ENCODE measurements at regions of chr16 and their contacts with region 1.

Region 1: DNA sequence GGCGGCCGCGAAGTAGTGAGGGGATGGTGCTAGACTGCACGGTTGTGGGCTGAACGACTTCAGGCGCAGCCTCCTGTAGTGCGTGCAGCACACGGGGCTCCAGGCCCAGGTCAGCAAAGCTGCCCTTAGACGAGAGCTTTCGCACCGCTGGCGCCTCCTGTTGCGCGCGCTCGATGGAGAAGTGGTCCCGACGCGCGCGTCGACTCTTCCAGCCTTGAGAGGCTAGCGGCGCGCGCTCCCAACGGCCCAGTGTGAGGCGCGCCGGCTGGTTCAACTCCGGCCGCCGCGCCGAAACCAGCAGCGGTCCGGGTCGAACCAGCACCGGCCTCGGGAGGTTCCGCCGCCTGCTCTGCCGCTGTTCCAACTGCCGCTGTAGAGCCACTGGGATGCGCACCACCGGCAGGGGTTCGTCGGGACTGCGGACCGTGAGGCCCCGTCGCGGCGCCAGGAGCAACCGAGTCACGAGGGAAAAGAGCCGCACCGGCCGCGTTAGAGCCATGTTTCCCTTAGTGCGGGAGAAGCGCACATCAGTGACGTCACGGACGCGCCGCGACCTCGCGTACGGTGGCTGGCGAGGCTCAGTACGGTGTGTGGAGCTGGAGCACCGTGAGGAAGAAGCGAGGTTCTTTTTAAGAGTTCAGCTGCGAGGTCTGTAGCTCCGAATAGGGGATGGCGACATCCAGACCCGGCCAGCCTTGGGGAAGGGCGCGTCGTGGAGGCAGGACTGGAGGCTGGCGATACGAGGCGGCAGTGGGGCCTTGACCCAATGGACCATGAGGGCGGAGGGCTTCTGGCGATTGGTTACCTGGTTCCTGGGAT is at the starts of genes DDX28 and DUS2:
- DNase-seq: peak; percentile 66 to 94
- H3K4me3 ChIP-seq: peak within 1 kb of the TSS; percentile 84 to 87
- H3K27ac ChIP-seq: peak within 1 kb of the TSS; percentile 66 to 87
- H3K4me1 ChIP-seq: peaks cover 8 to 14% of the 10 kb centered on the region in 2 donors
- H3K27me3 ChIP-seq: no peaks in the 10 kb centered on the region
- CTCF ChIP-seq: peak in 1 of 3 experiments; percentile 7
- total RNA-seq, gene DDX28: 3.0 TPM
- total RNA-seq, gene DUS2: 7.6 TPM

Region 2: GRCh38 chr16:67504041-67505021 is 518.6 kb before region 1 on chr16:
- intact Hi-C with region 1: no loop called
- DNase-seq: peak in 1 of 2 donors; percentile 39
- H3K4me3 ChIP-seq: no peak overlapping the region
- H3K27ac ChIP-seq: no peak overlapping the region
- H3K4me1 ChIP-seq: no peaks in the 10 kb centered on the region
- H3K27me3 ChIP-seq: no peaks in the 10 kb centered on the region
- CTCF ChIP-seq: no peak

Region 3: GRCh38 chr16:67928561-67929364 is 94.2 kb before region 1 on chr16:
- intact Hi-C with region 1: no loop called
- DNase-seq: peak in 1 of 2 donors; percentile 82
- H3K4me3 ChIP-seq: no peak overlapping the region
- H3K27ac ChIP-seq: no peak overlapping the region
- H3K4me1 ChIP-seq: peaks cover 10% of the 10 kb centered on the region in 2 donors
- H3K27me3 ChIP-seq: no peaks in the 10 kb centered on the region
- CTCF ChIP-seq: peak; percentile 68 to 90 (median 88)

Region 4: GRCh38 chr16:67968400-67969253 is 54.3 kb before region 1 on chr16 and contains the start of gene SLC12A4:
- intact Hi-C with region 1: loop called (anchors 2 kb)
- DNase-seq: peak; percentile 54 to 94
- H3K4me3 ChIP-seq: peak within 1 kb of the TSS; percentile 79 to 83
- H3K27ac ChIP-seq: peak within 1 kb of the TSS; percentile 94 to 98
- H3K4me1 ChIP-seq: peaks cover 11 to 39% of the 10 kb centered on the region in 2 donors
- H3K27me3 ChIP-seq: no peaks in the 10 kb centered on the region
- CTCF ChIP-seq: no peak
- total RNA-seq, gene SLC12A4: 83.2 TPM